H1 (cell line): ENCODE measurements at regions of chr1 and their contacts with region 1.

Region 1: DNA sequence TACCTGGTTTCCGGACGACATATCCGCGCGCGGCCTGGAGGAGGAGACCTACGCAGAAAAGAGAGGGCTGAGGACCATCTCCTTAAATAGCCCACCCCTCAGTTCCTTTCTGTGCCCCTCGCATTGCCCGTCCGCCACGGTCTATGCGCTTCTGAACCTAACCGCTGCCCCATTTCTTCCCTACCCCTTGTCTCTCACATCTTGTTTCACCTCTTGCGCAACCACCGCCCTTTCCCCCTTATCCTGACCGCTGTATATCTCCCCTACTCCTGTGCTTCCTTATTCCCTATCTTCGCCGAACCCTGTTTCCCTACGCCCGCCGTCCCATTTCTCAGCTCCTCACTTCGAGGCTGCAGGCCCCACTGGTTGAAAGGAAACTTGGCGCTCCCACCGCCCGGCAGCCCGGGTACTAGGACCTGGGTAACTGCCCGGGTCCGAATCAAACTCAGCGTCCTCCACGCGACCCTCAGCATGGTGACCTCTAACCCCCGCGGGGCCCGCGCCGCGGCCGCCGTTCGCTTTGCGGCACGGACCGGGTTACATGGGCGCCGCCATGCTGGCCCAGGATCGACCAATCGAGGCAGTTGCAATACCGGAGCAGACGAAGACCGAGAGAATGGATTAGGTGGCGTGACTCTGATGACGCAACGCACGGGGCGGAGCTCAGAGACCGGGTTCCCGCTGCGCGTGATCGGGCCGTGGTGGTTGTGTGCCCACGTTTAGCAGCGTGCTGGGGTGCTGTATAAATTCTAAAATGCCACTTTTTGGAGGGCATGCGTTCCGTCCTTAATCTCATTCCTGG is at the start of gene MRPS15:
- DNase-seq: peak; percentile 74 to 97
- H3K4me3 ChIP-seq: peak within 1 kb of the TSS; percentile 90 to 95 (median 93)
- H3K27ac ChIP-seq: peak within 1 kb of the TSS; percentile 84
- H3K4me1 ChIP-seq: peaks cover 0 to 3% (median 0%) of the 10 kb centered on the region in 4 experiments; a peak in 2 of 7 replicates
- H3K27me3 ChIP-seq: peaks cover 2 to 26% (median 21%) of the 10 kb centered on the region in 4 experiments
- CTCF ChIP-seq: no peak
- EP300 ChIP-seq: peak; percentile 36 to 87; a peak in 2 of 3 replicates
- POLR2A ChIP-seq: peak; percentile 36 to 96
- RAD21 ChIP-seq: no peak
- total RNA-seq, gene MRPS15: 129 and 130 TPM in 2 replicates

Region 2: GRCh38 chr1:36269408-36269838 is 194.6 kb before region 1 on chr1:
- CTCF ChIA-PET with region 1: no interaction called
- POLR2A ChIA-PET with region 1: no interaction called
- DNase-seq: no peak
- H3K4me3 ChIP-seq: no peak overlapping the region
- H3K27ac ChIP-seq: no peak overlapping the region
- H3K4me1 ChIP-seq: no peaks in the 10 kb centered on the region
- H3K27me3 ChIP-seq: no peaks in the 10 kb centered on the region
- CTCF ChIP-seq: no peak
- EP300 ChIP-seq: no peak
- POLR2A ChIP-seq: no peak
- RAD21 ChIP-seq: no peak

Region 3: GRCh38 chr1:36411674-36412520 is 52.1 kb before region 1 on chr1:
- CTCF ChIA-PET with region 1: no interaction called
- POLR2A ChIA-PET with region 1: no interaction called
- DNase-seq: no peak
- H3K4me3 ChIP-seq: no peak overlapping the region
- H3K27ac ChIP-seq: no peak overlapping the region
- H3K4me1 ChIP-seq: peaks cover 0 to 3% (median 0%) of the 10 kb centered on the region in 4 experiments; a peak in 1 of 7 replicates
- H3K27me3 ChIP-seq: no peaks in the 10 kb centered on the region
- CTCF ChIP-seq: no peak
- EP300 ChIP-seq: no peak
- POLR2A ChIP-seq: 0 out of 3 replicates have a peak, but pooled peaks of 1 of the 2 experiments have one; percentile 17
- RAD21 ChIP-seq: no peak

Region 4: DNA sequence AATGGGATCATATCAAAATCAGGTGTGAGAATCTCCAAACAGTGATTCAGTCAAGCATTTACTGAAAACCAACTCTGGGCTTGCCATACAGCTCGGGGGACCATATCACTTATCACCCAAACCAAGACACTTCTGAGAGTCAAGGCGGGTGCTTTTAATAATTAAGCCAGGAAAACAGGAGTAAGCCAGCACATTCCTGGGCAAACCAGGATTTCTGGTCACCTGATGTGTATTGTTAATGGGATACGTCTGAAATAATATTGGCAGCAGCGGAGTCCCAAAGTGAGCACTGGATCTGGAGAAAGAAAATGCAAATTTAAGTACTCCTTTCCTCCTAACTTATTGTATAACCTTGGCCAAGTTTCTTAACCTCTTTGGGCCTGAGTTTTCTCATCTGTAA is 31.4 kb before region 1 on chr1:
- CTCF ChIA-PET with region 1: no interaction called
- POLR2A ChIA-PET with region 1: no interaction called
- DNase-seq: no peak
- H3K4me3 ChIP-seq: no peak overlapping the region
- H3K27ac ChIP-seq: no peak overlapping the region
- H3K4me1 ChIP-seq: no peaks in the 10 kb centered on the region
- H3K27me3 ChIP-seq: no peaks in the 10 kb centered on the region
- CTCF ChIP-seq: no peak
- EP300 ChIP-seq: no peak
- POLR2A ChIP-seq: no peak
- RAD21 ChIP-seq: no peak

Region 5: DNA sequence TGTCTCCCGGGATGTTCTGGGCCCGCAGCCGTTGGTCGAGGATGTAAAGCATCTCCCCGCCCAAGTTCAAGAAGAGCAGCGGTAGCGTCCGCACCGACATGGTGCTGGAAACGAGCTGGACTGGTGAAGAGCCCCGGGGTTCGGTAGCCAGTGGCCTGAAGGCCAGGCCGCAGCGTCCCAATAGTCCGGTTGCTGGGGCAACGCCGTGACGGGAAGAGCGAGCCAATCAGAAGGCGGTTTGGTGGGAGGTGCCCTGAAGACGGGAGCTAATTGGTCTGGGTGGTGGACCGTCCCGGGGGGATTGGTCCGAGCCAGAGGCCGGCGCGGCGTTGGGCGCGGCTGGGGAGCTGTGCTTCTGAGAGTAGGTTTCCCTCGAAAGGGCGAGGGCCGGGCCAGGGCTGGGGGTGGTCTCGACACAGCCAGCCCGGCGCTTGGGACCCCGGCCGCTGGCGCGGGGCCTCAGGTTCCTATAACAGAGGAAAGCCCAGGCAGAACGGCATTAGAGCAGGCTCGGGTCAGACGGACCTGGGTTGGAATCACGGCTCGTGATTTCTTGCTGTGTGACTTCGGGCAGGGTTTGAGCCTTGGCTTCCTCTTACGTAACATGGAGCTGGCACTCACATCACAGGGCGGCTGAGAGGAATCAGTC is 13.6 kb before region 1 on chr1 and contains the start of gene OSCP1:
- CTCF ChIA-PET with region 1: interaction called, 11 read pairs
- POLR2A ChIA-PET with region 1: interaction called, 43 read pairs
- DNase-seq: peak; percentile 87 to 94
- H3K4me3 ChIP-seq: peak within 1 kb of the TSS; percentile 64 to 72 (median 70)
- H3K27ac ChIP-seq: peak within 1 kb of the TSS; percentile 51
- H3K4me1 ChIP-seq: no peaks in the 10 kb centered on the region; a peak in 1 of 7 replicates
- H3K27me3 ChIP-seq: no peaks in the 10 kb centered on the region
- CTCF ChIP-seq: no peak
- EP300 ChIP-seq: no peak
- POLR2A ChIP-seq: peak; percentile 31 to 88
- RAD21 ChIP-seq: no peak
- total RNA-seq, gene OSCP1: 1.4 and 1.8 TPM in 2 replicates

Region 6: DNA sequence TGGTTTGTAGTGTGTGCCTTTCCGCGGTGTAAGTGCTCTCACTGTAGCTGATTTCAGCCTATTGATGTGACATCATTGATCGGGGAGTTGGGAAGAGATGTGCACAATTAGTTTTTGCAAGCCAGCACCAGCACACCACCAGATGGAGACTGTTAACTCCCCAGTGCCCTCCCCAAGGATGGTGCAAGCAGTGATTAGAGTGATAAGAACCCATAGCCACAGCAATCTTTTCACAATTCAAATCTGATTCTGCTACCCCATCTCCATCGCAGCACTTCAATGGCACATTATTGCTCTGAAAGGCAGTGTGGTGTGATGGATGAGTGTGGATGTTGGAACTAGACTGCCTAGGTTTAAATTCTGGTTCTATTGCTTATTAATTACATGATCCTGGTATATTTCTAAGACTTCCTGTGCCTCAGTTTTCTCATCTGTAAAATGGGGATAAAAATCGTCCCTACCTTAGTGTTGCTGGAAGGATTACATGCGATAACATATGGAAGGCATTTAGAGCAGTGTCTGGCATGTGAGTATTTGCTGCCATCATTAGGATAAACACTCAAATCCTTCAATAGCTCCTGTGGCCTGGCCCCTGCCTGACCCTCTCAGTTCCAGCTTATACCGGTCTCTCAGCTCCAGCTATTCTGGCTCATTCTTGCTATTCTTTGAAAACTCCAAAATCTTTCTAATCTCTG is 12.1 kb after region 1 on chr1:
- CTCF ChIA-PET with region 1: interaction called, 3 read pairs
- POLR2A ChIA-PET with region 1: interaction called, 11 read pairs
- DNase-seq: no peak
- H3K4me3 ChIP-seq: no peak overlapping the region
- H3K27ac ChIP-seq: no peak overlapping the region
- H3K4me1 ChIP-seq: no peaks in the 10 kb centered on the region
- H3K27me3 ChIP-seq: 0 out of 7 replicates have a peak, but pooled peaks cover 0 to 2% (median 0%) of the 10 kb centered on the region in 4 experiments
- CTCF ChIP-seq: no peak
- EP300 ChIP-seq: no peak
- POLR2A ChIP-seq: no peak
- RAD21 ChIP-seq: no peak

Region 7: DNA sequence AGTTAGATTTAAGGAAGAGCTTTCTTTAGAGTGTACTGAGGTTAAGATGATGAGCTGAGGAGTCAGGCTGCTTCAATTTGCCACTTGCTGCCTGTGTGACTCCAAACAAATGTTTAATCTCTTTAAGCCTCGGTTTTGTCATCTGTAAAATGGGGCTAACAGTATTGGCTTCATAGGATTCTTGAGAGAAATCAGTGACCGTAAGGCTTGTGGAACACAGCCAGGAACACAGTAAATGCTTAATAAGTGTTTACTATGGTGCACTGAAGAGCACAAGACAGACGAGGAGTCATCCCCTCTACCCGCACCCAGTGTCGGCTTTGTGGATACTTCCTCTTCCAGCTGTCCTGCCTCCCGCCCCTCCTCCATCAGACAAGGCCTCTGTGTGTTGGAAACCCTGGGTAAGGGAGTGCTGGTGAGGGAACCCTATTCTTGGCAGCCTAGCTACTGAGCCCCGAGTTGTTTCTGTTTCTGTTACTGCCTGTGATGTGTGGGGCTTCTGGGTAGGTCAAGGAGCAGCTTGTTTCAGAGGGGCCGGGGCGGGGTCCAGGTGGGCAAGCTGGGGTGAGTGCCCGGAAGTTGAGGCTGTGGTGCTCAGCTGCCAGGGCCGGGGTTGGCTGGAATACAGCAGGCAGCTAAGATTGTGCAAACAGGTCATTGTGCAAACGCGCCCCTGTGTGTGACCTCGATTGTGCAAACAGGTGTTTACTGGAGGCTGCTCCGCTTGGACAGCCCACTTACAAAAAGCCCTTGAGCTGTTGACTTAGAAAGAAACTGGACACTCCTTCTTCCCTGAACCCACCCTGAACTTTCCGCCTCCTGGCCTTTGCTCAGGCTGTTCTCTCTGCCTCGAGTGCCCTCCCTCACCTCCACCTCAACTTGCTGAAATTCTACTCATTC is 22.7 kb after region 1 on chr1:
- CTCF ChIA-PET with region 1: interaction called, 3 read pairs
- POLR2A ChIA-PET with region 1: interaction called, 10 read pairs
- DNase-seq: no peak
- H3K4me3 ChIP-seq: no peak overlapping the region
- H3K27ac ChIP-seq: no peak overlapping the region
- H3K4me1 ChIP-seq: peaks cover 0 to 2% (median 0%) of the 10 kb centered on the region in 4 experiments; a peak in 3 of 7 replicates
- H3K27me3 ChIP-seq: no peaks in the 10 kb centered on the region
- CTCF ChIP-seq: no peak
- EP300 ChIP-seq: no peak
- POLR2A ChIP-seq: no peak
- RAD21 ChIP-seq: no peak

Region 8: DNA sequence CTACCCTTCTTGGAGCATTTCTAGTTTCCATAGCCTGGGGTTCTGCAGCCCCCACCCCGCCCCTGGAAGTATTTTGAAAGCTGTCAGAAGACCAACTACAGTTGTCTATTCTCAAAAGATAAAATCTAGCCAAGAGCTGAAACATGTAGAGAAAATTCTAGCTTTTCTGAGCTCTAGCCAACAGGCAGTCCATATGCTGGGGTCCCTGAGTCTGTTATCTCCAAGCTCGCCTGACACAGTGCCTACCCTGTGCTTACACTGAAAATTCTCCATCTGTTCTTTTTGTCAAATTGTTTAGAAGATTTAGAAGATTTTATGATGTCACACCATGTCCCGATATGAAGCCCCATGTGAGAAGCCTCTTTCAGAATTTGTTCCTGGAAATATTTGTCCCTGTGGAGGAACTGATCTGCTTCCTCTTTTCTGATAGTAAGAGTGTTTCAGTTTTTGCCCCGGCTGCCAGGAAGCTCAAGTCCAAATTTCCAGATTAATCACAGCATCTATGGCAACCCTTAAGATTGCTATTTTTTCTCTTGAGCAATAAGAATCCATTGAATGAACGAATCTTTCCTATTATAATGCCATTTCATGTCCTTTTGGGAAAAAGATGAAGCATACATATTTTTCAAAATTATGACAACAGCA is 42.4 kb after region 1 on chr1:
- CTCF ChIA-PET with region 1: no interaction called
- POLR2A ChIA-PET with region 1: no interaction called
- DNase-seq: no peak
- H3K4me3 ChIP-seq: no peak overlapping the region
- H3K27ac ChIP-seq: no peak overlapping the region
- H3K4me1 ChIP-seq: no peaks in the 10 kb centered on the region; a peak in 1 of 7 replicates
- H3K27me3 ChIP-seq: no peaks in the 10 kb centered on the region
- CTCF ChIP-seq: no peak
- EP300 ChIP-seq: no peak
- POLR2A ChIP-seq: no peak
- RAD21 ChIP-seq: no peak